BJ (cell line): ENCODE measurements at regions of chr2 and their contacts with region 1.

Region 1: DNA sequence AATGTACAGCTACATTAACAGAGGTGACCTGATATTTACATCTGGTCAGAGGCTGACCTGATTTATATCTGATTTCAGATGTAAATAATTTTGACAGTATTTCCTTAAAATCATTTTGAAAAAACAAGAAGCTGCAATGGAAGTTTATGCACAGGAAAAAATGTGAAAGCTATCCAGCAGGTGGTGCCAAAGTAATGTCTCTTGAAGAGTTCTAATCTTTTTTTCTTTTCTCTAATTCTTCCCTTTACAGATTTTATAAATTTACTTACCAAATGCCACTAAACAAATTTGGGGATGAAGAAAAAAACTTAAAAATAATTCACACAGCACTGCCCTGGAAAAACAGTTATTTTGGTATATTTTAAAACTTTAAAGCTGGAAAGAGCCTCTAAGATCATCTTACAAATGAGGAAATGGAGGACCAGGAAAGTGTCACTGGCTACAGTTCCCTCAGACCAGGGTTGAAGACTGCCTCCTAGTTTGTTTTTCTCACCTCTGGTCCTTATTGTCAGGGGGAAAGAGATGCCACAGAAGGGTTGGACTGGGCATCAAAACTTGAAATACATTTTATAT is 16.4 kb upstream of the FBLN7 start:
- DNase-seq: no peak
- H3K4me3 ChIP-seq: no peak overlapping the region
- H3K27me3 ChIP-seq: no peaks in the 10 kb centered on the region
- CTCF ChIP-seq: peak; percentile 61

Region 2: DNA sequence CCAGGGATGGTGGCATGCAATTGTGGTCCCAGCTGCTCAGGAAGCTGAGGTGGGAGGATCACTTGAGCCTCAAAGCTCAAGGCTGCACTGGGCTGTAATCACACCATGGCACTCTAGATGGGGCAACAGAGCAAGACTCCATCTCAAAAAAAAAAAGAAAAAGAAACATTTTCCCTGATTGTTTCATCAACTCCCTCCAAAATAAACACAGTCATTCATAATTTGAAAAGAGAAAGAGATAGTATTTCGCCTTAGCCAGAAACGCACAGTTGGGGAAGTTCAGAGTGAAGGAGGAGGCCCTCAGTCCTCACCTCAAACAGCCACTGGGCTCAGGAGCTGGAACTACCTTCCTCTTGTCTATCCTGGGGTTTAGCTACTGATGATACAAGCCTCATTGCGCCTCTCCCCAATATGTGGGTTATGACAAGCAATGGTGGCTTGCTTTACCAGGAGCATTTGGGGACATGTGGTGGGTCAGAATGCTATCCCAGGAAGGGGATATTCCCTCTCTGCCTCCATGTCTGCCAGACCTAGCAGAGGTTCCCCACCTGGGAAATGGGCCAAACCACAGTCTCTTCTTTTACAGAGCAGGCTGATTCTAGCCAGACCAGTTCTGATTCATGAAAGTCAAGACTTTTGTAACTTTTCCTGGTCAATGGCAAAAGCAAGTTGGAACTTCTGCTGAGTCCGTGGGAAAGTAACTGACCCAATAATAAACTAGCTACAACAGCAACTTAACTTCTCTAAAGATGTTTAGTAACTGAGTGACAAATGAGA is 88.9 kb before region 1 on chr2:
- CTCF ChIA-PET with region 1: no interaction called
- POLR2A ChIA-PET with region 1: no interaction called
- DNase-seq: no peak
- H3K4me3 ChIP-seq: no peak overlapping the region
- H3K27me3 ChIP-seq: no peaks in the 10 kb centered on the region; the same call in 1 of the 2 replicates
- CTCF ChIP-seq: no peak

Region 3: DNA sequence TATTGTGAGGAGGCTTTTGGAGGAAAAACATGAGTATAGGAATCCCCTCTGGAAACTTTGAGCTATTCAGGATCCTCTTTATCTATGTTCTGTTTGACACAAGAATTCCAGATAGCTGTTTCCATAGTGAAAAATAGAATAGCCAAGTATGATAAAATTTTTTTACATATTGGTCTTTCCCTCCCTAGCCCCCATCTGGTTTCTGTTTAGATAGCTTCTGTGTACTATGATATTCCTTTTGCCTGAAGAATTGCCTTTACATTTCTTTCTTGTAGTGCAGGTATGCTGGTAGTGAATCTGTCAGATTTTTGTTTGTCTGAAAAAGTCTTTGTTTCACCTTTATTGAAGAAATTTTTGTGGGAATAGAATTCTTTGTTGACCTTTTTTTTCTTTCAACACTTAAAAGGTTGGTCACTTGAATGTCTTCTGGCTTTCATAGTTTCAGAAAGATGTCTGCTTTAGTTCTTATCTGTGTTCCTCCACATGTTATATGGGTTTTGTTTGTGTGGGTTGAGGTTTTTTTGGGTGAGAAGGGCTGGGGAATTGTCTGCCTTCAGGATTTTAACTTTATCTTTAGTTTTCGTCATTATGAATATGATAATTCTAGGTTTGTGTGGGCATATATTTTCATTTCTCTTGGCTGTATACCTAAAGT is 13.5 kb before region 1 on chr2:
- CTCF ChIA-PET with region 1: interaction called, 11 read pairs
- POLR2A ChIA-PET with region 1: no interaction called
- DNase-seq: no peak
- H3K4me3 ChIP-seq: no peak overlapping the region
- H3K27me3 ChIP-seq: no peaks in the 10 kb centered on the region
- CTCF ChIP-seq: no peak

Region 4: DNA sequence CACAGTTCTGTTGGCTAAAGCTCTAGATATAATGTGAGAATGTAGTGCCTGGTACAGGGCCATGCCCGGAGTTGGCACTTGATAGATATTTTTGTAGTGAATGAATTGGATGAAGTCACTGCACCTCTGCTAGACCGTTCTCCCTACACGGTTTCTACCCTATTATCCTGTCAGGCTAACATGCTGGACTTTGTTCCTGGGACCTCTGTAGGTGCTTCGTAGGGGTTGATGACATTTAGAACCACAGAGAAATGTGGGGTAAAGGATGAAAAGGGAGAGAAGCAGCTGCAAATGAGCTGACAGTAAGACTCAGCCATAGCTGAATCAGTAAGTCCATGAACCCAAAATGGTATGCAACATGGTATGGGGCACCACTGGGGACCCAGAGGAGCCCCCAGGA is 12.4 kb after region 1 on chr2:
- CTCF ChIA-PET with region 1: interaction called, 11 read pairs
- POLR2A ChIA-PET with region 1: no interaction called
- DNase-seq: no peak
- H3K4me3 ChIP-seq: no peak overlapping the region
- H3K27me3 ChIP-seq: no peaks in the 10 kb centered on the region
- CTCF ChIP-seq: no peak

Region 5: DNA sequence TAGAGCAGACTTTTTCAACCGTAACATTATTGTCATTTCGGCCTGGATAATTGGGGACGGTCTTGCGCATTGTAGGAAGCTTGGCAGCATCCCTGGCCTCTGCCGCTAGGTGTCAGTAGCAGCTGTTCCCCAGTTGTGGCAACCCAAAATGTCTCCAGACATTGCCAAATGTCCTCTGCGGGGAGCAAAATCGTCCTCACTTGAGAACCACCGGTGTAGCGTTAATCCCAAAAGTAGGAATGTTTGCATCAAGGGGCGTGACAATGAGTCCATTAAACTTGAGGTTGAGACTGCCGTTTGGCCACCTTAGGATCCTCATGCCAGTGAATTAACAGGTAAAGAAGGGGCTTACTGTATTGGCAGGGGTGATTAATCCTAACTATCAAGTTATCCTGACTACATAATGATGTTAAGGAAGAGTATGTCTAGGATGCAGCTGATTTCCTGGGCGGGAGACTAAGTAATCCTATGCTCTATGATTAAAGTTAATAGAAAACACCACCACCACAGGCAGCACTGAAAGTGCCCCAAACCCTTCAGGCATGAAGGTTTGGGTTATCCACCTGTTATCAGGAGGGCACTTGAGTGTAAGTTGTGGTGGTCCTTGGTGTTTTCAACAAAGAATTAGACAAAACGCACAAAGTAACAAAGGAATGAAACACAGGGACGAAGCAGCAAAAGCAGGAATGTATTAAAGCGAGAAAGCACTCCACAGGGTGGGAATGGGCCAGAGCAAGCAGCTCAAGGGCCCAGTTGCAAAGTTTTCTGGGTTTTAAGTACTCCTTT is 137.9 kb after region 1 on chr2:
- CTCF ChIA-PET with region 1: interaction called, 16 read pairs
- POLR2A ChIA-PET with region 1: no interaction called
- DNase-seq: peak; percentile 9
- H3K4me3 ChIP-seq: no peak overlapping the region
- H3K27me3 ChIP-seq: no peaks in the 10 kb centered on the region
- CTCF ChIP-seq: peak; percentile 98